ENCODE measurements at regions of chr19 and their contacts with region 1.

Region 1: GRCh38 chr19:48255376-48256303 is at the start of gene CARD8:
- DNase-seq: peak; percentile 93
- total RNA-seq, gene CARD8: 26.1 TPM

Region 2: DNA sequence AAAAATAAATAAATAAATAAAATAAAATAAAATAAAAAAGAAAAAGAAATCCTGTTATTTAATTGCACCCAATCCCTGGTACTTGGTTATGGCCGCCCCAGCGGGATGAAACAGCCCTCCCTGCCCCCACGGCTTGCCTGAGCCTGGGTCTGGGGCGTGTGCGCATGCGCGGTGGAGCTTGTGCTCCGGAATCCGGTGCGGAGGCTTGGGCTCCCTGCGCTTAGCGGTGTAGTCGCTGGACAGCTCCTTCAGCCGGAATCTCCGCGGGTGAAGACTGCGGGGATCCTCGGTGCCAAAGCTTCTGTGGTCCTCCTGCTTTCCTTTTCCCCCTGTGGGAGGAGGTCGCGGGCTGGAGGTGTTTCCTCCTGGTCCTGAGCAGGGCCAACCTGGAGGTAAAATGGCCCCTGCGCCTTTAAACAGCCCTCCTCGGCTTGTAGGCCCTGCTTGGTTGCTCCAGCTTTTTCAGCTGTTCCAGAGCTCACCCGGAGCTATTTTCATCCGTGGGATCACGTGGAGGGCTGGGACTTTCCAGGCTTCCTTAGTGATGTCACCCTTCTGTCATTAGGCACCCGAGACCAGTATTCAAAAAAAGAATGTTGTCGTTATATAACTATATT is 145.2 kb before region 1 on chr19 and contains the start of gene PLA2G4C:
- intact Hi-C with region 1: loop called (anchors 5 kb)
- DNase-seq: peak; percentile 93
- total RNA-seq, gene PLA2G4C: 61.8 TPM

Region 3: GRCh38 chr19:48158210-48158790 is 97.3 kb before region 1 on chr19:
- intact Hi-C with region 1: loop called (anchors 5 kb)
- DNase-seq: no peak

Region 4: GRCh38 chr19:48203732-48204628 is 51.7 kb before region 1 on chr19:
- intact Hi-C with region 1: loop called (anchors 5 kb)
- DNase-seq: peak; percentile 97

Measured in cardiac septum (tissue), 1 donor.